ENCODE measurements at regions of chr1 and their contacts with region 1.

Region 1: GRCh38 chr1:150268705-150269403 is at the start of gene APH1A:
- DNase-seq: peak; percentile 92 to 95
- H3K4me3 ChIP-seq: peak within 1 kb of the TSS; percentile 81 to 99 (median 96)
- H3K27ac ChIP-seq: peak within 1 kb of the TSS; percentile 69
- H3K4me1 ChIP-seq: peaks cover 8 to 13% (median 10%) of the 10 kb centered on the region in 4 experiments; a peak in 6 of 7 replicates
- H3K27me3 ChIP-seq: no peaks in the 10 kb centered on the region
- CTCF ChIP-seq: no peak
- EP300 ChIP-seq: peak in 1 of 2 experiments; percentile 83; a peak in 1 of 3 replicates
- POLR2A ChIP-seq: no peak; a peak in 1 of 3 replicates
- RAD21 ChIP-seq: no peak
- total RNA-seq, gene APH1A: 110 and 111 TPM in 2 replicates

Region 2: DNA sequence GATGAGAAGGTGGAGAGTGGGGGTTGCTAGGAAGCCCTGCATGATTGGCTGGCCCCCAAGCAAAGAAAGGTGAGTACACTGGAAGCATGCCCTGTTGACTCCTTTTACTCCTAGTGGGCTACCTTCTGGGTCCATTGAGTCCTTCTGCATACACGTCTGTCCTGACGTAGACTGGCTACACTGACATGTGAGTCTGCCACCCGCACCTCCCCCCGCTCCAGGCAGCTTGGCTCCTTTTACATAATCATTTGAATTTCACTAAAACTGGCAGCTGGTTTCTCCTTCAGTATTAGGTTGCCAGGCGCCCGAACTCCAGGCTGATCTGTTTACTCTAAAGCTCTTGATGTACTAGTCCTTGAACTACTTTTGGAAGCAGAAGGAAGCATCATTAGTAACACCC is 33.5 kb after region 1 on chr1:
- CTCF ChIA-PET with region 1: interaction called, 3 read pairs
- POLR2A ChIA-PET with region 1: interaction called, 12 read pairs
- DNase-seq: no peak
- H3K4me3 ChIP-seq: peak overlapping the region in 1 of 4 experiments; percentile 40; a peak in 2 of 8 replicates
- H3K27ac ChIP-seq: peak overlapping the region; percentile 74
- H3K4me1 ChIP-seq: peaks cover 5 to 14% (median 6%) of the 10 kb centered on the region in 4 experiments; a peak in 5 of 7 replicates
- H3K27me3 ChIP-seq: no peaks in the 10 kb centered on the region
- CTCF ChIP-seq: no peak
- EP300 ChIP-seq: no peak
- POLR2A ChIP-seq: peak in 1 of 2 experiments; percentile 56; a peak in 1 of 3 replicates
- RAD21 ChIP-seq: no peak

Region 3: DNA sequence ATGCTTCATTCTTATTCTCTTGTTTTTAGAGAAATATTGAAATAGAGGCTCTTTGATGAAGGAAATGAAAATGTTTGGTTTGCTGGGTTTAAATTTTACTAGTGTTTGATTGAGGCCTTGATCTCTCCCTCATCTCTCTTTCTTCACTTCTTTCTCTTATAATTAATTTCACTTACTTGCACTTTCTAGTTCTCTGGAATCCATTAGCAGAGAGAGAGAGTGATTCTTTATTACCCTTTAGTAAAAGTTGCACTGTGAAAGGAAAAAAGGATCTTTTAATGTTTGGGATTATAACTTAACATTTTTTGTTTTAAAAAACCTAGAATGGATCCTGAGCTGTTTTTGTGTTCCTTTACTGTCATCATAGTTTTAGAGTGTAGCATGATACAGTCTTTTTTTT is 107.3 kb after region 1 on chr1:
- CTCF ChIA-PET with region 1: no interaction called
- POLR2A ChIA-PET with region 1: no interaction called
- DNase-seq: no peak
- H3K4me3 ChIP-seq: no peak overlapping the region
- H3K27ac ChIP-seq: no peak overlapping the region
- H3K4me1 ChIP-seq: peaks cover 0 to 3% (median 2%) of the 10 kb centered on the region in 4 experiments; a peak in 1 of 7 replicates
- H3K27me3 ChIP-seq: no peaks in the 10 kb centered on the region
- CTCF ChIP-seq: no peak
- EP300 ChIP-seq: no peak
- POLR2A ChIP-seq: no peak
- RAD21 ChIP-seq: no peak

Region 4: GRCh38 chr1:150388211-150388610 is 119.4 kb after region 1 on chr1:
- CTCF ChIA-PET with region 1: no interaction called
- POLR2A ChIA-PET with region 1: no interaction called
- DNase-seq: no peak
- H3K4me3 ChIP-seq: no peak overlapping the region
- H3K27ac ChIP-seq: no peak overlapping the region
- H3K4me1 ChIP-seq: no peaks in the 10 kb centered on the region
- H3K27me3 ChIP-seq: no peaks in the 10 kb centered on the region
- CTCF ChIP-seq: no peak
- EP300 ChIP-seq: no peak
- POLR2A ChIP-seq: no peak
- RAD21 ChIP-seq: no peak

Region 5: DNA sequence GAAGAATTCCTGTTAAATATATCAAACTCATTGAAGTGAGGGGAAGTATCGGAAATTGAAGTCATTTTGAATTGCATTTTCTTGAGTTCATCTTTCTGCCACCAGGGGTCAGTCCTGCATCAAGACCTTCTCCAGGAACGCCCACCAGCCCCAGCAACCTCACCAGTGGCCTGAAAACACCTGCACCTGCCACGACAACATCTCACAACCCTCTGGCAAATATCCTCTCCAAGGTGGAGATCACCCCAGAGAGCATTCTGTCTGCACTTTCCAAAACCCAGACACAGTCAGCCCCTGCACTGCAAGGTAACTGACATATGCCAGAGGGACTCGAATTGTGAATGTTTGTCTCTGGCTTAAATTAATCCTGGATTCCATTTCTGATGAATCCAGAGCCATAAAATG is 195.6 kb after region 1 on chr1:
- CTCF ChIA-PET with region 1: no interaction called
- POLR2A ChIA-PET with region 1: no interaction called
- DNase-seq: peak; percentile 7 to 84
- H3K4me3 ChIP-seq: no peak overlapping the region
- H3K27ac ChIP-seq: no peak overlapping the region
- H3K4me1 ChIP-seq: no peaks in the 10 kb centered on the region
- H3K27me3 ChIP-seq: no peaks in the 10 kb centered on the region
- CTCF ChIP-seq: peak; percentile 55 to 82 (median 63)
- EP300 ChIP-seq: no peak
- POLR2A ChIP-seq: no peak
- RAD21 ChIP-seq: peak; percentile 76 to 78

Measured in H1 (cell line).